Dendritic cell treated with granulocyte-macrophage colony-stimulating factor and Interleukin-4, amounts not matched to agents 40 ng/mL and 50 ng/mL, for 4 days (primary cell): ENCODE measurements at regions of chr20 and their contacts with region 1.

Region 1: GRCh38 chr20:20052074-20052970 is at the starts of genes CFAP61 and CRNKL1:
- H3K4me3 Mint-ChIP-seq: peak within 1 kb of the TSS; percentile 97
- H3K27ac Mint-ChIP-seq: peak within 1 kb of the TSS; percentile 92
- H3K4me1 Mint-ChIP-seq: no peaks in the 10 kb centered on the region
- H3K27me3 Mint-ChIP-seq: no peaks in the 10 kb centered on the region

Region 2: GRCh38 chr20:20017001-20017843 is 35.1 kb before region 1 on chr20 and contains the start of gene NAA20:
- intact Hi-C with region 1: loop called (anchors 1 kb)
- H3K4me3 Mint-ChIP-seq: peak within 1 kb of the TSS; percentile 95
- H3K27ac Mint-ChIP-seq: peak within 1 kb of the TSS; percentile 86
- H3K4me1 Mint-ChIP-seq: peaks cover 59% of the 10 kb centered on the region
- H3K27me3 Mint-ChIP-seq: no peaks in the 10 kb centered on the region